ENCODE measurements at regions of chr17 and their contacts with region 1.

Region 1: DNA sequence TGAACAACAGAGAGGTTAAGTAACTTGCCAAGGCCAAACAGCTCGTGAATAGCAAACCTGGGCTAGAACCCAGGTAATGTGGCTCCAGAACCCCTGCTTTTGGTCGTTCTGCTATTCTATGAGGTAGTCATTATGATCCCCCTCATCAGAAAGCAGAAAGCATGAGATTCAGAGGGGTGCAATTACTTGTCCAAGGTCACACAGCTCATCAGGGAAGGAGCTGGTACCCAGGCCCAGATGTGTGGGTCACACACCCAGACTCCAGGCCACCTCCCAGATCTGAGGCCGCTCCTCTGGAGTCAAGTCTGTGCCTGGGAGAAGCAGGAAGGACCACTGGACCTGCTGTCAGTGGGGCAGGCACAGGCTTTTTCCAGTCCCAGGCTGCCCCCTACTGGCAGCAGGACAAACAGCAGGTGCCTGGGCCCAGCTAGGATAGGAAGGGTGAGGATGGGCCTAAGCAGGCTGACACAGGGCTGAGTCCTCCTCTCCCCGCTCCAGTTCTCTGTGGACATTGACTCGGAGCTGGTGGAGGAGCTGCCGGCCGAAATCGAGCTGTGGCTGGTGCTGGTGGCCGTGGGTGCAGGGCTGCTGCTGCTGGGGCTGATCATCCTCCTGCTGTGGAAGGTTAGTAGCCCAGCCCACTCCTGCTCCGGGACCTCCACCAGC is 7.8 kb upstream of the PDK2 start:
- DNase-seq: peak; percentile 97
- H3K4me3 ChIP-seq: no peak overlapping the region; a peak in 1 of 4 replicates
- H3K27ac ChIP-seq: peak overlapping the region in 1 of 2 experiments; percentile 32; a peak in 1 of 4 replicates
- H3K4me1 ChIP-seq: no peaks in the 10 kb centered on the region
- H3K27me3 ChIP-seq: no peaks in the 10 kb centered on the region
- CTCF ChIP-seq: peak; percentile 99
- EP300 ChIP-seq: no peak
- RAD21 ChIP-seq: peak; percentile 98

Region 2: DNA sequence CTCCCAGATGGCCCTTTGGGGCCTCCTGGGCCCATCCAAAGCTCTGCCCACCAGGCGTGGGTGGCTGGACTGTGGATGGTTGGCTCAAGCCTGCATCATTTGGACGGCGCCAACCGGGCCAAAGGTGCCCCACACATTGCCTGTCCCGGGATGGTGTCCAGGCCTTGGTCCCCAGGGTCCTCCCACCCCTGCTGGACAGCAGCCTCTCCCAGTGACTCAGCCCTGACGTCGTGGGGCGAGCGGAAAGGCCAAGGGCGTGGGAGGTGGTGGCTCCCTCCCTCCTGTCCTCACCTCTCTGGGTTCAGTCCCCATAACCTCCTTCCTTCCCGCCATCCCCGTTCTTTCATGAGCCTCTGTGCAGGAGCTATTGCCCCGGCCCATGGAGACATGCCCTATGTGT is 160.5 kb before region 1 on chr17:
- CTCF ChIA-PET with region 1: no interaction called
- POLR2A ChIA-PET with region 1: no interaction called
- DNase-seq: no peak
- H3K4me3 ChIP-seq: no peak overlapping the region
- H3K27ac ChIP-seq: no peak overlapping the region
- H3K4me1 ChIP-seq: peaks cover 0 to 1% of the 10 kb centered on the region in 2 experiments; a peak in 1 of 4 replicates
- H3K27me3 ChIP-seq: peaks cover 96% of the 10 kb centered on the region
- CTCF ChIP-seq: no peak
- EP300 ChIP-seq: no peak
- RAD21 ChIP-seq: no peak

Region 3: DNA sequence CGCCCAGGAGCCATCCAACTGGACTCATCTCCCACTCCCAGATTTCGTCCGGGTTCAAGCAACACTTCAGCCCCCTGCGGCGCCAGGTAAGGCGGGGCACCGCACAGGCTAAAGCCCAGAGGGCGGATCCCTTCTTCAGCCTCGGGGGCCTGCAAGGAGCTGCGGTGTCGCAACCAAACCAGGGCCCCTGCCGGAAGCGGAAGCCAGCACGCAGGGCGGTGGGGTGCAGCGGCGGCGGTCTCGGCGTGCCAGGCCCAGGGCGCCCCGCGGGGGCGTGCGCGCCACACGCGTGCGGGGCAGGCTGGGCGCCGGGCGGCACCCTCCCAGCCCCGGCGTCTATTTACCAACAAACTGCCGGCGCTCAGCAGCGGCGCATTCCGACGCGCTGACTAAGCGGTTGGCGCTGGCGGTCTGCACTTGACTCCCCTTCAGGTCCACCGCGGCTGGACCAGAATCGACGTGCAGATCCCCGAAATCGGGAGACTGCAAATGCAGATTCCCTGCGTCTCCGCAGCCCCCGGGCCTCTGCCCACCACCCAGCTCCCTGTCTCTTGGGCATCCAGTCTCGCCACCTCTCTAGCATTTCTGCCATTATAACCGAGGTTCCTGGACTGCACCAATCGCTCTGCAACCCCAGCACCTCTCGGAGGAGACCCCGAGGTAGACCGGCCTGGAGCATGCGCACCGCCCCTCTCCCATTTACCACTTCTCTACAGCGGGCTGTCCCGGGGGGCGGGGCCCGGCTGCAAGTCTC is 118.8 kb before region 1 on chr17:
- CTCF ChIA-PET with region 1: interaction called, 17 read pairs
- POLR2A ChIA-PET with region 1: no interaction called
- DNase-seq: peak; percentile 97
- H3K4me3 ChIP-seq: peak overlapping the region; percentile 50
- H3K27ac ChIP-seq: no peak overlapping the region
- H3K4me1 ChIP-seq: peaks cover 0 to 13% of the 10 kb centered on the region in 2 experiments; a peak in 1 of 4 replicates
- H3K27me3 ChIP-seq: peaks cover 100% of the 10 kb centered on the region
- CTCF ChIP-seq: no peak
- EP300 ChIP-seq: no peak
- RAD21 ChIP-seq: no peak

Region 4: GRCh38 chr17:50047488-50048126 is 39.8 kb before region 1 on chr17:
- CTCF ChIA-PET with region 1: interaction called, 73 read pairs
- POLR2A ChIA-PET with region 1: no interaction called
- DNase-seq: no peak
- H3K4me3 ChIP-seq: no peak overlapping the region
- H3K27ac ChIP-seq: peak overlapping the region; percentile 40 to 100; a peak in 3 of 4 replicates
- H3K4me1 ChIP-seq: peaks cover 25 to 64% of the 10 kb centered on the region in 2 experiments
- H3K27me3 ChIP-seq: no peaks in the 10 kb centered on the region
- CTCF ChIP-seq: no peak
- EP300 ChIP-seq: peak in 1 of 2 experiments; percentile 76; a peak in 1 of 4 replicates
- RAD21 ChIP-seq: no peak

Region 5: DNA sequence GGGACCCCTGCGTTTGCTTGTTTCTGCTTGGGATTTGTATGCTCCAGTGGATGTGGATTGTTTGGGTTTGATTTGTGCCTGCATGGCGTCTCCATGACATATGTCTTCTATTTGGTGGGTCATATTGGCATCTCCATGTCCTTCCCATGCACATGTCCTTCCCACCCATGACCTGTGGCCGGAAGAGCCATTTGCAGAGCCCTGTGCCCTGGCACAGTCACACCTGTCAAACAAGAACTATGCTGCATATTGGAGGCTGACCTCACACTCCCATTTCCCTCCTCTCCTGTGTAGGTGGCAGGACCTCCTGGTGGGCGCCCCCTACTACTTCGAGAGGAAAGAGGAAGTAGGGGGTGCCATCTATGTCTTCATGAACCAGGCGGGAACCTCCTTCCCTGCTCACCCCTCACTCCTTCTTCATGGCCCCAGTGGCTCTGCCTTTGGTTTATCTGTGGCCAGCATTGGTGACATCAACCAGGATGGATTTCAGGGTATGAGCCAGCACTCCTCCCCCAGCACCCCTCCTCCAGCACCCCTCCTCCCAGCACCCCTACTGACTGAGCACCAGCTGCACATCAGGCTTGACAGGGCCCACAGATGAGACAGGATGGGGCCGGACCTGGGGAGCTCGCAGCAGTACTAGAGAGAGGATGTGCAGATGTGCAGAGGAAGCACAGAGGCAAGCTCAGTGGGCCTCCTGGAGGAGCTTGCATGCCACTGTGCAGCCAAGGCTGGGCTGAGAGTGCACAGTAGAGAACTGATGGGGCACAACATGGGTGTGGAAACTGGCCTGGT is 15.5 kb before region 1 on chr17:
- CTCF ChIA-PET with region 1: interaction called, 51 read pairs
- POLR2A ChIA-PET with region 1: no interaction called
- DNase-seq: no peak
- H3K4me3 ChIP-seq: no peak overlapping the region
- H3K27ac ChIP-seq: peak overlapping the region in 1 of 2 experiments; percentile 53; a peak in 1 of 4 replicates
- H3K4me1 ChIP-seq: peaks cover 0 to 2% of the 10 kb centered on the region in 2 experiments; a peak in 2 of 4 replicates
- H3K27me3 ChIP-seq: no peaks in the 10 kb centered on the region
- CTCF ChIP-seq: no peak
- EP300 ChIP-seq: no peak
- RAD21 ChIP-seq: no peak

Region 6: DNA sequence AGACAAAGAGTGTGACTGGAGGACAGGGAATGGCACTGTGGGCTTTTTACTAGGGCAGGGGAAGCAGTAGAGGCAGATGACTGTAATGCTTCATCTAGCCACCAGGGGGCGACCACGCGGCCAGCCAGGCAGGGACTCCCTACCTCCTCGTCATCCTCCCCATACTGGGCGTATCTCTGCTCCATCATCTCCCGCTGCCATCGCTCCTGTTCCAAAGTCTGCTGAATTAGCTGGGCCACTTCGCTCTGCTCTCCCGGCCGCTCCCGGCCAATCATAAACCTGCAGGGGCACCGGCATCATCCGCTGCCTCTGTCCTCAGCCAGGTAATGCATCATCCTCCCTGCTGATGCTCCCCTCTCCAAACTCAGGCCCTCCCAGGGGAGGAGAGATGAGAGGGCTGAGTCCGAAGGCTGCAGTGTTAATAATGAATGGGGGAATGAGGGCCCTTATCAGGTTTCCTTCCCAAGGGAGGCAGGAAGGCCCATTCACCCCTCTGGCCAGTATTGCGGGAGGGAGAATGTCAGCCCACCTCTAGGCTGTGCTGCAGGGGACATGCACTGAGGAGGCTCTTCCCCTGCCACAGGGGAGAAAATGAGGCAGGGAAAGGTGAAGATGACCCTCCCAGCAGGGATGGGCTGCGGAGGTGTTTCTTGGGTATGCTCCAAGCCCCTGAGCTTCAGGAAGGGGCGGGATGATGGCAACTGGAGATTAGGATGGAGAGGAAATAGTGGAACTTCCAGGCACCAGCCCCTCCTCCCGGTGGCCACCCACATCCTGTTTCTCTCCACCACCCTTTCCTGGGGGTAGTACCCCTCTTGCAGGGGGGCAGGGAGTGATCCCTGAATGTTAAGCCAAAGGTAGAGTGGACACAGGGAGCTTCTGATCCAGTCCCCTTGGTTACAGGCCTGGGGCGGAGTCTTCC is 52.8 kb after region 1 on chr17:
- CTCF ChIA-PET with region 1: interaction called, 12 read pairs
- POLR2A ChIA-PET with region 1: no interaction called
- DNase-seq: peak; percentile 98
- H3K4me3 ChIP-seq: no peak overlapping the region; a peak in 1 of 4 replicates
- H3K27ac ChIP-seq: peak overlapping the region in 1 of 2 experiments; percentile 40; a peak in 2 of 4 replicates
- H3K4me1 ChIP-seq: peaks cover 0 to 7% of the 10 kb centered on the region in 2 experiments; a peak in 1 of 4 replicates
- H3K27me3 ChIP-seq: no peaks in the 10 kb centered on the region
- CTCF ChIP-seq: peak; percentile 96
- EP300 ChIP-seq: peak in 1 of 2 experiments; percentile 27; a peak in 1 of 4 replicates
- RAD21 ChIP-seq: peak; percentile 82

Region 7: GRCh38 chr17:50169121-50169764 is 81.9 kb after region 1 on chr17:
- CTCF ChIA-PET with region 1: interaction called, 25 read pairs
- POLR2A ChIA-PET with region 1: no interaction called
- DNase-seq: peak; percentile 90
- H3K4me3 ChIP-seq: no peak overlapping the region
- H3K27ac ChIP-seq: no peak overlapping the region
- H3K4me1 ChIP-seq: peaks cover 12 to 22% of the 10 kb centered on the region in 2 experiments
- H3K27me3 ChIP-seq: no peaks in the 10 kb centered on the region
- CTCF ChIP-seq: peak; percentile 99
- EP300 ChIP-seq: no peak; a peak in 1 of 4 replicates
- RAD21 ChIP-seq: peak; percentile 98